ENCODE measurements at regions of chr17 and their contacts with region 1.

Region 1: DNA sequence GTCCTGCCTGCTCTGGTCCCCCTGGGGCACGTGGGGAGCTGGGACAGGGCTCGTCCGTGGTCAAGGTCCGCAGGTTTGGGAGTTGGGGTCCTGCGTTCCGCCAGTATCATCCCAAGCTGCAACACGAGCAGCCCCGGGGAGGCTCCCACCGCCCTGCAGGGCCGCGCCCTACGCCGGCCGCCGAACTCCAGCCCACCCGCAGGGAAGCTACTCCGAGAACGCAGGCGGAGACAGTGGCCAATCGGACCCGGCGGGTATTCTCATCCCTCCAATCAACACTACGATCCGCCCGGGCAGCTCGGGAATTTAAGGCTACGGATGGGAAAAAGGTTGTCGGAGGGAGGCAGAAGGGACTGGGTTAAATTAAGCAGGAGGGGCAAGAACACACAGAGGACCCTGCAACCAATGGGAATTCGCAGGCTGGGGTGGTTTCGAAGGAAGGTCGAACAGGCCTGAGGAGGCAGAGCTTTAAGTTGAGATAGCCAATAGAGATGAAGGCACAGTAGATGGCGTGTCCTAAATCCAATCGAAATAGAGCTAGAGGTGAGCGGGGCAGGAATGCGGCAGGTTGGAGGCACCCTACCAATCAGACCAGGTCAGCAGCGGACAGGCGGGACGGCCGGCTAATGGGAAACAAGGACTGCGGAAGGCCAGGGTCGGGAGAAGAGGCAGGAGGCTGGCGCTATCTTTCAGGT is 626 bp downstream of the SPAG7 start:
- DNase-seq: peak; percentile 99
- ATAC-seq: peak; percentile 85
- H3K4me3 ChIP-seq: peak overlapping the region; percentile 68 to 92 (median 84)
- H3K4me3 Mint-ChIP-seq: no peak overlapping the region
- H3K27ac ChIP-seq: peak overlapping the region; percentile 67 to 68
- H3K27ac Mint-ChIP-seq: no peak overlapping the region
- H3K4me1 ChIP-seq: peaks cover 17 to 22% of the 10 kb centered on the region in 2 donors
- H3K4me1 Mint-ChIP-seq: peaks cover 15% of the 10 kb centered on the region
- H3K27me3 ChIP-seq: no peaks in the 10 kb centered on the region
- H3K27me3 Mint-ChIP-seq: no peaks in the 10 kb centered on the region
- CTCF ChIP-seq: no peak

Region 2: GRCh38 chr17:4709794-4710692 is 256.9 kb before region 1 on chr17 and contains the start of gene ARRB2:
- CTCF ChIA-PET with region 1: no interaction called
- POLR2A ChIA-PET with region 1: interaction called, 3 read pairs
- intact Hi-C with region 1: loop called (anchors 1 kb)
- DNase-seq: peak; percentile 99
- ATAC-seq: peak; percentile 87
- H3K4me3 ChIP-seq: peak within 1 kb of the TSS; percentile 65 to 90 (median 75)
- H3K4me3 Mint-ChIP-seq: peak within 1 kb of the TSS; percentile 86
- H3K27ac ChIP-seq: peak within 1 kb of the TSS; percentile 60 to 74
- H3K27ac Mint-ChIP-seq: peak within 1 kb of the TSS; percentile 88
- H3K4me1 ChIP-seq: peaks cover 28 to 38% of the 10 kb centered on the region in 2 donors
- H3K4me1 Mint-ChIP-seq: peaks cover 43% of the 10 kb centered on the region
- H3K27me3 ChIP-seq: no peaks in the 10 kb centered on the region
- H3K27me3 Mint-ChIP-seq: no peaks in the 10 kb centered on the region
- CTCF ChIP-seq: peak; percentile 76
- total RNA-seq, gene ARRB2: 148 and 164 TPM in 2 replicates

Region 3: GRCh38 chr17:4858882-4859260 is 108.1 kb before region 1 on chr17:
- CTCF ChIA-PET with region 1: no interaction called
- POLR2A ChIA-PET with region 1: no interaction called
- intact Hi-C with region 1: no loop called
- DNase-seq: no peak
- ATAC-seq: no peak
- H3K4me3 ChIP-seq: no peak overlapping the region
- H3K4me3 Mint-ChIP-seq: no peak overlapping the region
- H3K27ac ChIP-seq: no peak overlapping the region
- H3K27ac Mint-ChIP-seq: no peak overlapping the region
- H3K4me1 ChIP-seq: no peaks in the 10 kb centered on the region
- H3K4me1 Mint-ChIP-seq: peaks cover 7% of the 10 kb centered on the region
- H3K27me3 ChIP-seq: no peaks in the 10 kb centered on the region
- H3K27me3 Mint-ChIP-seq: no peaks in the 10 kb centered on the region
- CTCF ChIP-seq: no peak

Region 4: GRCh38 chr17:4872786-4873185 is 94.2 kb before region 1 on chr17:
- CTCF ChIA-PET with region 1: no interaction called
- POLR2A ChIA-PET with region 1: no interaction called
- intact Hi-C with region 1: no loop called
- DNase-seq: no peak
- ATAC-seq: no peak
- H3K4me3 ChIP-seq: no peak overlapping the region
- H3K4me3 Mint-ChIP-seq: no peak overlapping the region
- H3K27ac ChIP-seq: no peak overlapping the region
- H3K27ac Mint-ChIP-seq: no peak overlapping the region
- H3K4me1 ChIP-seq: no peaks in the 10 kb centered on the region
- H3K4me1 Mint-ChIP-seq: no peaks in the 10 kb centered on the region
- H3K27me3 ChIP-seq: no peaks in the 10 kb centered on the region
- H3K27me3 Mint-ChIP-seq: no peaks in the 10 kb centered on the region
- CTCF ChIP-seq: no peak

Region 5: DNA sequence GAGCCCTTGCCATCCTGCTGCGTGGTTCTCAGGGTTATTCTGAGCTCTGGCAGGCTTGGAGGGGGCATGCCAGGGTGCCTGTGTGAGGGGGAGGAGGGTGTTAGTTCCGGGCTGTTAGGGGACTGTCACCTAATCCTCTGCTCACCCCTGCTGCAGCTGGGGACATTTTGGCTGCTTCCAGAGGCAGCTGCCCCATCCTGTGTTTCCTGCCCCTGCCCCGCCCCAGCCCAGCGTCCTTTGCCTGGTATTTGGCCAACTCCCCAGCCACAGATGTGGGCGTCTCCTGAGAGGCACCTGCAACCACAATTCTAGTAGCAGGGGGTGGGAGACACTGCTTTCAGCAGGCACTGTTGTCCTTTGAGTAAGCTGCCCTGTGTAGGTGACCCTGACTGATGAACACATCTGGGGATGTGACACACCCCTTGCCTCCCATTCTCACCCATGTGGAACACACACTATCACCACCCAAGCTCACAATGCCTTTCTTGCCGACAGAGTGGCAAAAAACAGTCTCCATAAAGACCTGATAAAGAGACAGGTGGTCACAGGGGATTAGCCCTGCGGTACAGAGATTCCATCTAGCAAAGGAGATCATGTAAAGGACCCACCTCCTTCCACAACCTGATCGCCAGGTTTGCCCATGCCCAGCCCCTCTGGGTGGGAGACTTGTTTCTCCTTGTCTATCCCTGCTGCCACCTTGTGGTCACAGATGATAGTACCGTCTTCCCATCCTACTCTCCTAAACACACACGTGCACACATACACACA is 63.8 kb before region 1 on chr17 and contains the start of gene CHRNE:
- CTCF ChIA-PET with region 1: interaction called, 32 read pairs
- POLR2A ChIA-PET with region 1: interaction called, 9 read pairs
- intact Hi-C with region 1: loop called (anchors 1 kb)
- DNase-seq: peak; percentile 87
- ATAC-seq: peak; percentile 38
- H3K4me3 ChIP-seq: peak within 1 kb of the TSS in 1 of 5 experiments; percentile 38
- H3K4me3 Mint-ChIP-seq: peak within 1 kb of the TSS; percentile 72
- H3K27ac ChIP-seq: peak within 1 kb of the TSS in 1 of 2 donors; percentile 22
- H3K27ac Mint-ChIP-seq: peak within 1 kb of the TSS; percentile 82
- H3K4me1 ChIP-seq: peaks cover 45 to 53% of the 10 kb centered on the region in 2 donors
- H3K4me1 Mint-ChIP-seq: peaks cover 45% of the 10 kb centered on the region
- H3K27me3 ChIP-seq: peaks cover 0 to 29% (median 10%) of the 10 kb centered on the region in 4 experiments
- H3K27me3 Mint-ChIP-seq: peaks cover 7% of the 10 kb centered on the region
- CTCF ChIP-seq: peak; percentile 83
- total RNA-seq, gene CHRNE: 0.99 and 1.0 TPM in 2 replicates

Region 6: GRCh38 chr17:4948931-4949320 is 18.1 kb before region 1 on chr17:
- CTCF ChIA-PET with region 1: interaction called, 16 read pairs
- POLR2A ChIA-PET with region 1: interaction called, 81 read pairs
- intact Hi-C with region 1: loop called (anchors 1 kb)
- DNase-seq: peak; percentile 90
- ATAC-seq: peak; percentile 50
- H3K4me3 ChIP-seq: peak overlapping the region; percentile 59 to 99 (median 96)
- H3K4me3 Mint-ChIP-seq: peak overlapping the region; percentile 98
- H3K27ac ChIP-seq: peak overlapping the region; percentile 73 to 93
- H3K27ac Mint-ChIP-seq: peak overlapping the region; percentile 99
- H3K4me1 ChIP-seq: peaks cover 37 to 45% of the 10 kb centered on the region in 2 donors
- H3K4me1 Mint-ChIP-seq: peaks cover 46% of the 10 kb centered on the region
- H3K27me3 ChIP-seq: no peaks in the 10 kb centered on the region
- H3K27me3 Mint-ChIP-seq: no peaks in the 10 kb centered on the region
- CTCF ChIP-seq: no peak

Region 7: GRCh38 chr17:4997302-4998026 is 30.5 kb after region 1 on chr17 and contains the starts of genes INCA1 and KIF1C:
- CTCF ChIA-PET with region 1: interaction called, 3 read pairs
- POLR2A ChIA-PET with region 1: interaction called, 7 read pairs
- intact Hi-C with region 1: loop called (anchors 1 kb)
- DNase-seq: peak; percentile 95
- ATAC-seq: peak; percentile 96
- H3K4me3 ChIP-seq: peak within 1 kb of the TSS; percentile 34 to 73 (median 66)
- H3K4me3 Mint-ChIP-seq: peak within 1 kb of the TSS; percentile 85
- H3K27ac ChIP-seq: peak within 1 kb of the TSS in 1 of 2 donors; percentile 65
- H3K27ac Mint-ChIP-seq: peak within 1 kb of the TSS; percentile 83
- H3K4me1 ChIP-seq: peaks cover 22 to 26% of the 10 kb centered on the region in 2 donors
- H3K4me1 Mint-ChIP-seq: peaks cover 21% of the 10 kb centered on the region
- H3K27me3 ChIP-seq: peaks cover 0 to 13% (median 2%) of the 10 kb centered on the region in 4 experiments
- H3K27me3 Mint-ChIP-seq: no peaks in the 10 kb centered on the region
- CTCF ChIP-seq: no peak
- total RNA-seq, gene INCA1: 0.30 and 0.51 TPM in 2 replicates
- total RNA-seq, gene KIF1C: 29.6 and 41.5 TPM in 2 replicates

Region 8: GRCh38 chr17:5078106-5079028 is 111.4 kb after region 1 on chr17 and contains the start of gene ZFP3:
- CTCF ChIA-PET with region 1: interaction called, 4 read pairs
- POLR2A ChIA-PET with region 1: interaction called, 4 read pairs
- intact Hi-C with region 1: loop called (anchors 1 kb)
- DNase-seq: peak; percentile 92
- ATAC-seq: peak; percentile 83
- H3K4me3 ChIP-seq: peak within 1 kb of the TSS; percentile 68 to 78 (median 75)
- H3K4me3 Mint-ChIP-seq: peak within 1 kb of the TSS; percentile 81
- H3K27ac ChIP-seq: peak within 1 kb of the TSS; percentile 81 to 86
- H3K27ac Mint-ChIP-seq: peak within 1 kb of the TSS; percentile 95
- H3K4me1 ChIP-seq: peaks cover 8 to 21% of the 10 kb centered on the region in 2 donors
- H3K4me1 Mint-ChIP-seq: peaks cover 30% of the 10 kb centered on the region
- H3K27me3 ChIP-seq: no peaks in the 10 kb centered on the region
- H3K27me3 Mint-ChIP-seq: no peaks in the 10 kb centered on the region
- CTCF ChIP-seq: peak; percentile 64
- total RNA-seq, gene ZFP3: 15.8 and 16.2 TPM in 2 replicates

Measured in B cell (primary cell).